ENCODE measurements at regions of chr5 and their contacts with region 1.

Region 1: DNA sequence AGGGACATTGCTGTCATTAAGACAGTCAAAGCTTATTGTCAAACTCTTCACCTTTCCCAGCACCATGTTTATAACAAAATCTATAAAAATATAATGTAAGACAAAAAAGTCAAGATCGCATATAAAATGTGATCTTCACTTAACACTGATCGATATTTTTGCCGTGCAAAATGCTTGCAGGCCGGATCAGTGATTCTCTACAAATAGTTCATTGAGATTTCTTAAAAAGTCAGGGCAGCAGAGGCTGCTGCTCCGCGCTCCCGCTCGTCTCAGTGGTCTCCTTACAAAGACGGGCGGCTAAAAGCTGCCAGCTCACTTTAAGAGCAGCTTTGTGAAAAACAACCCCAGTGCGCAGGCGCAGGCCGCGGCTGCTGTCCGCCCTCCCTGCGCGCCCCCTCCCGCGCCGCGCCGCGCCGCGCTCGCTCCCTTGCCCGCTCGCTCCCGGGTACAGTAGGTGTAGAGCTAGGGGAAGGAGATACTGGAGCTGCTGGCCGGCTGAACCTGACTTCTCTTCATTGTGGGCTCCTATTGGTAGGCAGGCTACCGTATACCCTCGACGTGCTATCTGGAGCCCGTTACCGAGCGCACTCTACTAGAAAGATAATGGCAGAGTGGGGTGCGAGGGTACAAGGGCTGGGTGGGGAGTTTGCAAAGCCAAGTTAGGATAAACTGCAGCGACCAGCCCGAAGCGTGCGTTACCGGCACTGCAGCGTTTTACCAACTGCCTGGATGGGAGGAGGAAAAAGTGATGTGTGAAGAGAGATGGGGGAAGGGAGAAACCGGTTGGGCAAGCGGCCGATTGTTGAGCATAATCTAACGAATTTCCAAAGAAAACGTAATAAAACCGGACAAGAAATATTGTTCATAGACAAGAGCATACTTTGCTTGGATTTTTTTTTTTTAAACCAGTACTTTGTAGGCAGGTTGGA is at the start of gene ARRDC3:
- DNase-seq: peak; percentile 95
- H3K4me3 ChIP-seq: peak within 1 kb of the TSS; percentile 70 to 81
- H3K27ac ChIP-seq: peak within 1 kb of the TSS; percentile 99 to 100
- H3K4me1 ChIP-seq: no peaks in the 10 kb centered on the region
- H3K27me3 ChIP-seq: no peaks in the 10 kb centered on the region
- CTCF ChIP-seq: peak in 2 of 4 experiments; percentile 30 to 37
- POLR2A ChIP-seq: peak; percentile 94
- total RNA-seq, gene ARRDC3: 31.4 to 54.9 TPM

Region 2: GRCh38 chr5:90932052-90932699 is 451.1 kb before region 1 on chr5:
- intact Hi-C with region 1: loop called (anchors 2 kb)
- DNase-seq: peak; percentile 65
- H3K4me3 ChIP-seq: no peak overlapping the region
- H3K27ac ChIP-seq: peak overlapping the region in 1 of 2 donors; percentile 14
- H3K4me1 ChIP-seq: no peaks in the 10 kb centered on the region
- H3K27me3 ChIP-seq: no peaks in the 10 kb centered on the region
- CTCF ChIP-seq: peak; percentile 41 to 86 (median 78)
- POLR2A ChIP-seq: no peak

Region 3: DNA sequence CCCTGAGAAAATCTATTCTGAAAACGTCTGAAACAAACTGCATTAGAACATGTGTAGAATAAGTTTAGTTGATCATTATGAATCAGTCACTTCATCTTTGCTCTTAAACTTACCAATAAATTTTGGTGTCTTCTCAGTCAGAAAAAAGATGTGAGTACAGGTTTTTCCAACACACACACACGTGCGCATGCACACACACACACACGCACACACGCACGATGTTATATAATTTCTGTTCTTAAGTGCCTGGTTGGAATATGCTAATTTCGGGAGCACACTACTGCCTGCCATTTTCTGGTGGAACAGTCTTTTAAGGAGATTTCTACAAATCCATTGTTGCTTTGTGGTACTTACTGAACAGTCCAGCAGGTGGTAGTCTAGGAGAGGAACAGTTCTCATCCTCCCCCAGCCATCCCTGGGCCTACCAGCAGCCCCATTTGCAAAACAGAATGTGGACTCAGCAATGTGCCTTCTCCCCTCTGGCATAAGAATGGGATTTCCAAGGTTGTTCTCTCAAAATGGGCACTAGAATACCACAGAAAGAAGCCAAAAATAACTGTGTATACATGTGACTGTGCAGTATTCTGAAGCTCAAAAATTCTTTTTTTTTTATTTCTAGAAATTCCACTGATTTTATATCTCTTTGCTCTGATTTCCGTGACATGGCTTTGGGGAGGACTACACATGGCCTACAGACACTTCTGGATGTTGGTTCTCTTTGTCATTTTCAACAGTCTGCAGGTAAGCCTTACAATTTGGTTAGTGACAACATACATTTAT is 281.5 kb before region 1 on chr5:
- intact Hi-C with region 1: loop called (anchors 1 kb)
- DNase-seq: peak; percentile 76
- H3K4me3 ChIP-seq: no peak overlapping the region
- H3K27ac ChIP-seq: no peak overlapping the region
- H3K4me1 ChIP-seq: no peaks in the 10 kb centered on the region
- H3K27me3 ChIP-seq: no peaks in the 10 kb centered on the region
- CTCF ChIP-seq: peak; percentile 60 to 90 (median 86)
- POLR2A ChIP-seq: no peak

Region 4: GRCh38 chr5:91280362-91281269 is 102.7 kb before region 1 on chr5:
- intact Hi-C with region 1: loop called (anchors 2 kb)
- DNase-seq: peak; percentile 91
- H3K4me3 ChIP-seq: peak overlapping the region; percentile 32 to 46
- H3K27ac ChIP-seq: peak overlapping the region; percentile 82 to 85
- H3K4me1 ChIP-seq: no peaks in the 10 kb centered on the region
- H3K27me3 ChIP-seq: no peaks in the 10 kb centered on the region
- CTCF ChIP-seq: peak in 2 of 4 experiments; percentile 22 to 24
- POLR2A ChIP-seq: peak; percentile 53

Region 5: DNA sequence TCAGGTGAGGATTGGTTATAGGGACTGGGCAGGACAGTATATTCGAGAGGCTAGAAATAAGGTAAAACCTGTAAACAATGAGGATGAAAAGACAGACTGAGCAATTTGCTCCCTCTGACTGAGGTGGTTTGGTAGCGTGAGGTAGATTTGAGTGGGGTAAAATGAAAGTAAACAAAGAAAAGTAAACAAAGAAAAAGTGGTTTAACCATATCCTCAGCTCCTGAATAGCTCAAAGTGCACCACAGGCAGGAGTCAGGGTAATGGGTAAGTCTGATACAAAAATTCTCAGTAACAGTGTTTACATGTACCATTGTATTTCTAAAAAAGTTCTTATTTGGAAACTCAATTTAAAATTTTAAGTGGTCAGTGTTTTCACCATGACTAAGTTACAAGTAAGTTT is 202.9 kb after region 1 on chr5:
- intact Hi-C with region 1: no loop called
- DNase-seq: no peak
- H3K4me3 ChIP-seq: no peak overlapping the region
- H3K27ac ChIP-seq: no peak overlapping the region
- H3K4me1 ChIP-seq: no peaks in the 10 kb centered on the region
- H3K27me3 ChIP-seq: no peaks in the 10 kb centered on the region
- CTCF ChIP-seq: no peak
- POLR2A ChIP-seq: no peak

Measured in prostate gland (tissue), 2 donors.